Astrocyte of the cerebellum (primary cell): ENCODE measurements at regions of chr5 and their contacts with region 1.

Region 1: GRCh38 chr5:143086908-143087637 is 316.4 kb downstream of the NR3C1 start:
- DNase-seq: peak; percentile 28
- H3K4me3 ChIP-seq: no peak overlapping the region
- CTCF ChIP-seq: no peak

Region 2: GRCh38 chr5:143041972-143042770 is 44.9 kb before region 1 on chr5:
- in situ Hi-C with region 1: loop called (anchors 5 kb)
- DNase-seq: no peak
- H3K4me3 ChIP-seq: no peak overlapping the region
- CTCF ChIP-seq: no peak

Region 3: GRCh38 chr5:143481666-143482531 is 394.8 kb after region 1 on chr5:
- in situ Hi-C with region 1: no loop called
- DNase-seq: no peak
- H3K4me3 ChIP-seq: no peak overlapping the region
- CTCF ChIP-seq: no peak